Activated B cell treated with CpG ODN at 0.5 μM for 24 hours (primary cell): ENCODE measurements at regions of chr22 and their contacts with region 1.

Region 1: GRCh38 chr22:41381329-41382097 is at the start of gene TEF:
- DNase-seq: peak; percentile 95
- ATAC-seq: peak; percentile 84
- H3K4me3 Mint-ChIP-seq: peak within 1 kb of the TSS; percentile 91
- H3K27ac Mint-ChIP-seq: peak within 1 kb of the TSS; percentile 98
- H3K4me1 Mint-ChIP-seq: peaks cover 24% of the 10 kb centered on the region
- H3K27me3 Mint-ChIP-seq: no peaks in the 10 kb centered on the region
- CTCF ChIP-seq: no peak
- total RNA-seq, gene TEF: 5.1 and 5.2 TPM in 2 replicates

Region 2: GRCh38 chr22:41197038-41197972 is 184.2 kb before region 1 on chr22:
- CTCF ChIA-PET with region 1: no interaction called
- POLR2A ChIA-PET with region 1: no interaction called
- intact Hi-C with region 1: loop called (anchors 2 kb)
- DNase-seq: peak; percentile 89
- ATAC-seq: peak; percentile 92
- H3K4me3 Mint-ChIP-seq: peak overlapping the region; percentile 89
- H3K27ac Mint-ChIP-seq: no peak overlapping the region
- H3K4me1 Mint-ChIP-seq: peaks cover 8% of the 10 kb centered on the region
- H3K27me3 Mint-ChIP-seq: peaks cover 4% of the 10 kb centered on the region
- CTCF ChIP-seq: no peak

Region 3: DNA sequence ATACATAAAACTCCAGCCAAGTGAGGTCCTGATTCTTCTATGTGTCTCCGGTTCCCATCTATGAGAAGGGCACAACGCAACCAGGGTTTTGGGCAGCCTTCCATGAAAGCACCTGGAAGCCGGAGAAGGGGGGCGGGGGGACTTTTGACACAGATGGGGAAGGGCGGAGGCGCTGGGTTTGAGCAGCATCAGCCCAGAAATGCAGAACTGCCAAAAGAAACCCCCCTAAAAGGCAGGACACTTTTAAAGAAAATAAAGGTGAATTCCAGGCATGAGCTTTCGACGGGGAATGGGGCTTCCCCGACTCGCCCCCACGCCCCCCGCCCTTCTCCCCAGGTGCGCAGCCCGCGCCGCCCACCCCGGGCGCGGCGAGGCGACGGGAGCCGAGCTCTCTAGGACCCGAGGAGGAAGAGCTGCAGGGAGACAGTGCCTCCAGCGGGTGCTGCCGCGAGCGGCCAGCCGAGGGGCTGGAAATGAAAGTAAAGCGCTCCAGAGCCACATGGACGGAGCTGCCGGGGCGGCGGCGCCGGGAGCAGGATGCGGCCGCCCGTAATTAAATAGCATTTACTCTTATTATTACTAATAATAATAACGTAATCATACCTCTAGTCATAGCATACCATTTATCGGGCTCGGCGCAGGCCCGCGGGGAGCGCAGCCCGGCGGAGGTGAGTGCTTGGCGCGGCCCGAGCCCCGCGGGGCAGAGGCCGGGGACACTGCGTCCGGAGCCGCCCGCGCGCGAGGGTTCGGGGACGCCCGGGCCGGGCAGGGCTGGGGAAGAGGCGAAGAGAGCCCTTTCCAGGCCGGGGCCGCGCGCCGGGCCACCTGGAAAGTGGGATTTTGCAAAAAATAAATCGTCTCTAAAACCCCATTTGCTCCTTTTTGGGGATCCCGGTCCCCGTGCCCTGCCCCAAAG is 80.2 kb before region 1 on chr22 and contains the start of gene ZC3H7B:
- CTCF ChIA-PET with region 1: no interaction called
- POLR2A ChIA-PET with region 1: interaction called, 35 read pairs
- intact Hi-C with region 1: loop called (anchors 1 kb)
- DNase-seq: peak; percentile 74
- ATAC-seq: peak; percentile 93
- H3K4me3 Mint-ChIP-seq: peak within 1 kb of the TSS; percentile 83
- H3K27ac Mint-ChIP-seq: peak within 1 kb of the TSS; percentile 92
- H3K4me1 Mint-ChIP-seq: peaks cover 30% of the 10 kb centered on the region
- H3K27me3 Mint-ChIP-seq: no peaks in the 10 kb centered on the region
- CTCF ChIP-seq: no peak
- total RNA-seq, gene ZC3H7B: 54.0 and 58.2 TPM in 2 replicates

Region 4: DNA sequence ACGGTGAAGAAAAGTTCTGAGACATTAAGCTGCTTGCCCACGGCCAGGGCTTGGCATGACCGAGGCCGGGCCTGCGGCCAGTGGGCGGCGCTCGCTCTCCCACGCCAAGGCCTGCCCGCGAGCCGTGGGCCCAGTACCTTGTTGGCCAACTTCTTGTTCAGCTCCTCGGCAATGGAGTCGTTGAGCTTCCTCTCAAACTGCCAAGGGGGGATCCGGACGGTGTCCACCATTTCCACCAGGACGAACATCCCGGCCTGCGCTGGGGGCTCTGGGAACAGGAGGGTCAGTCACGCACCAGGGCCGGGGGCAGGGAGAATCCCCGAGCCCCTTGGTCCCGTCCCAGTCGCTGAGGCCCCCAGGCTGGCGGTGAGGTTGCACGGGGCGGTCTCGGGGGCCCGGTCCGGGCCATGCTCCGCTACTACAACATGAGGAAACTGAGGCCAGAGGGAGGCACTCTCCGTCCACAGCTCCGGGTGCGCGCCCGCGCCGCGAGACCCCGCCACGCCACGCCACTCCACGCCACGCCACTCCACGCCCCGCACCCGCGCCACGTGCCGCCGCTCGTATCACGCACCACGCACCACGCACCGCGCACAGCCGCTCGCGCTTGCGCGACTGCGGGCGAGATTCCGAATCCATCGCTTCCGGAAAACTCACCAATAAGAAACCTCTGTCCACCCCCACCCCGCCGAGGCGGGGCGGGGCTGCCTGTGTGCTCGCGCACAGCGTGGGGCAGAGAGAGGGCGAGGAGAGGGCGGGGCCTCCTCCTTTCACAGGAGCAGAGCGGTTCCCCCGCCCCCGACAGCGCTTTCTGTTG is 162.5 kb after region 1 on chr22 and contains the start of gene POLR3H:
- CTCF ChIA-PET with region 1: no interaction called
- POLR2A ChIA-PET with region 1: interaction called, 10 read pairs
- intact Hi-C with region 1: loop called (anchors 1 kb)
- DNase-seq: peak; percentile 93
- ATAC-seq: peak; percentile 99
- H3K4me3 Mint-ChIP-seq: peak within 1 kb of the TSS; percentile 96
- H3K27ac Mint-ChIP-seq: peak within 1 kb of the TSS; percentile 86
- H3K4me1 Mint-ChIP-seq: peaks cover 43% of the 10 kb centered on the region
- H3K27me3 Mint-ChIP-seq: no peaks in the 10 kb centered on the region
- CTCF ChIP-seq: no peak
- total RNA-seq, gene POLR3H: 39.0 and 43.9 TPM in 2 replicates

Region 5: DNA sequence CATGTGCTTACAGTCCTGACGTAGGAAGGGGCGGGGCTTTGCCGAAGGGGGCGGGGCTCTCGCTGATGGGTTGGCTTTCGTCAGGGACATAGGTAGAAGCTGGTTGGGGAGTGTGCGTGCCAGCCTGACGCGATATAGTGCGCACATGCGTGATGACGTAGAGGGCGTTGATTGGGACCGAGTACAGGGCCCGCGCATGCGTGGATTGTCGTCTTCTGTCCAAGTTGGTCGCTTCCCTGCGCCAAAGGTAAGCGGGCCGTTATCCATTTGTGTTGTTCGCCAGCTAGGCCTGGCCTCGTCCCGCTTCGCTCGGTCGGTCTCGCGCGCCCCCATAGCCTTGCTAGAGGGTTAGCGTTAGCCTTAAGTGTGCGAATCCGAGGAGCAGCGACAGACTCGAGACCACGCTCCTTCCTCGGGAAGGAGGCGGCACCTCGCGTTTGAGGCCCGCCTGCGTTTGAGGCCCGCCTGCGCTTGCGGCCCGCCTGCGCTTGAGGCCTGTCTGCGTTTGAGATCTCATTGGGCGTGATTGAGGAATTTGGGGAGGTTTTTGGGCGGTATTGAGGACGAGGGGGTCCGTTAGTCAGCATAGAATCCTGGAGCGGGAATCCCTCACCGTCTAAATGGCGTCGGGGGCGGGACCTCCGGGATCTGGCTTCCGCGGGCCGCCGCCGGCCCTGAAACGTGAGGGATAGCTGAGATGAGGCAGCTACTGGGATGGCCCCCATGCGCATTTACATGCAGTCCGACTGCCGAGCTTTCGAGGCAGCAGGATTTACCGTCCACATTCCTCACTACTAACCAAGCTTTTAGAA is 239.8 kb after region 1 on chr22 and contains the start of gene XRCC6:
- CTCF ChIA-PET with region 1: no interaction called
- POLR2A ChIA-PET with region 1: interaction called, 9 read pairs
- intact Hi-C with region 1: loop called (anchors 1 kb)
- DNase-seq: peak; percentile 99
- ATAC-seq: peak; percentile 92
- H3K4me3 Mint-ChIP-seq: peak within 1 kb of the TSS; percentile 98
- H3K27ac Mint-ChIP-seq: peak within 1 kb of the TSS; percentile 98
- H3K4me1 Mint-ChIP-seq: peaks cover 38% of the 10 kb centered on the region
- H3K27me3 Mint-ChIP-seq: no peaks in the 10 kb centered on the region
- CTCF ChIP-seq: no peak
- total RNA-seq, gene XRCC6: 297 and 319 TPM in 2 replicates

Region 6: GRCh38 chr22:41697126-41697775 is 315.7 kb after region 1 on chr22:
- CTCF ChIA-PET with region 1: no interaction called
- POLR2A ChIA-PET with region 1: no interaction called
- intact Hi-C with region 1: no loop called
- DNase-seq: peak; percentile 91
- ATAC-seq: peak; percentile 83
- H3K4me3 Mint-ChIP-seq: peak overlapping the region; percentile 63
- H3K27ac Mint-ChIP-seq: peak overlapping the region; percentile 72
- H3K4me1 Mint-ChIP-seq: peaks cover 12% of the 10 kb centered on the region
- H3K27me3 Mint-ChIP-seq: no peaks in the 10 kb centered on the region
- CTCF ChIP-seq: peak; percentile 51